ENCODE measurements at regions of chr11 and their contacts with region 1.

Region 1: DNA sequence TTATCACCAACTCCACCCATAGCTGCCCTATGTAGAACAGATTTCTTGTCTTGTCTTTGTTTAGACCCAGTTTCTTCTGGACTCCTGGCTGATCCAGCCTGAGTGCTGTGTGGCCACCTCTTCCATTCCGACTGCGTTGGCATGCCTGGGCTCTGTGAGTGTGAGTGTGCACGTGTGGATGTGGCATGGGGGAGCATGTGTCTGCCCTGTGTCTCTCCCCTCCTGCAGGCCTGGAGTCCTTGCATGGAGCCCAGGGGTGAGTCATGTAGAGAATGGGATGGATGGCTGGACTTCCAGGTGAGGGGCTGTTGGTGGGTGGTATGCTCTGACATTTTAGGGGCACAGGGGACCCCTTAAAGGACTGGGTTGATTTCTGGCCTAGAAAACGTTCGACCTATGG is 194.7 kb downstream of the GRIK4 start:
- DNase-seq: no peak
- H3K4me3 ChIP-seq: no peak overlapping the region
- H3K27ac ChIP-seq: no peak overlapping the region
- H3K4me1 ChIP-seq: peaks cover 0 to 2% (median 0%) of the 10 kb centered on the region in 4 experiments
- H3K27me3 ChIP-seq: peaks cover 0 to 3% (median 0%) of the 10 kb centered on the region in 5 experiments

Region 2: DNA sequence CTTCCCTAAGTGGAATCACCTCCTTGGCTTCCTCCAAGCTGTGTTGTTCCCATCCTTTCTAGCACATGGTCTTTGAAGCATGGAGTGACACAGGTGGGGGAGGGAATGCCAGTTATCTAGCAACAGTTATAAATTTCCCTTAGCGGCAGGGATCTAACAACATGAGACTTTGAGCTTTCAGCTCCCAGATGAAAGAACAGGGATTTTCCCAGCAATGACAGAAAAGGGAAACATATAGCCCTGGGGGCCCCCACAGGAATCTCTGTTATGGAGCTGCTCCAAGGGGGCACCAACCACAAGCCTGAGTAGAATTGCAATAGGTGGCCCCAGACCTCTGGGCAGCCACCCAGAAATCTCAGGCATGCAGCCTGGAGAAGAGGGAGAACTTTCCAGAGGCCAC is 31.7 kb before region 1 on chr11:
- CTCF ChIA-PET with region 1: no interaction called
- POLR2A ChIA-PET with region 1: no interaction called
- DNase-seq: no peak
- H3K4me3 ChIP-seq: no peak overlapping the region
- H3K27ac ChIP-seq: no peak overlapping the region
- H3K4me1 ChIP-seq: no peaks in the 10 kb centered on the region
- H3K27me3 ChIP-seq: peaks cover 0 to 26% (median 8%) of the 10 kb centered on the region in 5 experiments

Region 3: GRCh38 chr11:120744016-120744994 is 38.0 kb after region 1 on chr11:
- CTCF ChIA-PET with region 1: no interaction called
- POLR2A ChIA-PET with region 1: interaction called, 10 read pairs
- DNase-seq: no peak
- H3K4me3 ChIP-seq: no peak overlapping the region
- H3K27ac ChIP-seq: no peak overlapping the region
- H3K4me1 ChIP-seq: no peaks in the 10 kb centered on the region
- H3K27me3 ChIP-seq: peaks cover 0 to 22% (median 2%) of the 10 kb centered on the region in 5 experiments